Mammary epithelial cell (primary cell): ENCODE measurements at regions of chr1 and their contacts with region 1.

Region 1: DNA sequence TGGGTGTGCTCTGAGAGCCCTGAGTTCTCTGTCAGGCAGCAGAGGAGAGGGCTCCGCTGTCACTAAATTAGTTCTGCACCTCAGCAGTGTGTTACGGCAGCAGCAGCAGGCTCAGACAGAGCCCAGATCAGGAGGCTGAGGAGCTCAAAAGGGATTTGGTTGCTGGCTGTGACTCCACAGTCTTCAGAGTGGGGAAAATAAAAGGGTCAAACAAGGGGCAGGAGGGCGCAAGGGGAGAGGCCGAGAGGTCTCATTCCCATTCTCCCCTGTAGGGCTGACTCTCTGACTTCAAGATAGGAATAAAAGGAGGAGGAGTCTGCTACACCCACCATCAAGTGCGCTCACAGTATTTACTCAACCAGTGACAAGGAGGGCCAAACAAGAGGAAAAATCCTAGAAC is 9.2 kb upstream of the SLC45A3 start:
- DNase-seq: no peak
- H3K4me3 ChIP-seq: no peak overlapping the region
- H3K27ac ChIP-seq: no peak overlapping the region
- H3K4me1 ChIP-seq: no peaks in the 10 kb centered on the region
- H3K27me3 ChIP-seq: no peaks in the 10 kb centered on the region
- CTCF ChIP-seq: no peak

Region 2: GRCh38 chr1:205598841-205599668 is 90.4 kb before region 1 on chr1:
- CTCF ChIA-PET with region 1: no interaction called
- dilution Hi-C with region 1: loop called (anchors 5 kb)
- in situ Hi-C with region 1: no loop called
- intact Hi-C with region 1: no loop called
- DNase-seq: peak; percentile 22
- H3K4me3 ChIP-seq: no peak overlapping the region
- H3K27ac ChIP-seq: peak overlapping the region; percentile 2
- H3K4me1 ChIP-seq: peaks cover 40% of the 10 kb centered on the region
- H3K27me3 ChIP-seq: no peaks in the 10 kb centered on the region
- CTCF ChIP-seq: no peak

Region 3: DNA sequence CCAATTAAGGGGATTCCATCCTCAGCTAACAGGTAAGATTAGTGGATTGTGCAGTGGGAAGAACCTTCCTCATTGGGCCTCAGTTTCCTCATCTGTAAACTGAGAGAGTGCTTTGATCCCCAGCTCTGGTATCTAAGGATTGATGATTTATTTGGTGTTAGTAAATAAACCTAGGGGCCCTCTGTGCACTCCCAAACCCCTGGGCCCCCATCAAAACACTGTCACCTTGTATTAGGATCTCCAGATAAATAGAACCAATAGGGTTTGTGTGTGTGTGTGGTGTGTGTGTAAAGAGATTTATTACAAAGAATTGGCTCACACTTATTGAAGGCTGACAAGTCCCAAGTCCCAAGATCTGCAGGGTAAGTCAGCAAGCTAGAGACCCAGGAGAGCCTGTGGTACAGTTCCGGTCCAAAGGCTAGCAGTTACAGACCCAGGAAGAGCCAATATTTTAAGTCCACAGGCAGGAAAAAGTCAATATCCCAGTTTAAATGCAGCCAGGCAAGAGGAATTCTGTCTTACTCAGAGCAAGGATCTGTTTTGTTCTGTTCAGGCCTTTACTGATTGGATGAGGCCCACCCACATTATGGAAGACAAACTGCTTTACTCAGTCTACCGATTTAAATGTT is 46.7 kb before region 1 on chr1:
- CTCF ChIA-PET with region 1: no interaction called
- dilution Hi-C with region 1: loop called (anchors 5 kb)
- in situ Hi-C with region 1: no loop called
- intact Hi-C with region 1: no loop called
- DNase-seq: no peak
- H3K4me3 ChIP-seq: no peak overlapping the region
- H3K27ac ChIP-seq: no peak overlapping the region
- H3K4me1 ChIP-seq: no peaks in the 10 kb centered on the region
- H3K27me3 ChIP-seq: no peaks in the 10 kb centered on the region
- CTCF ChIP-seq: no peak

Region 4: GRCh38 chr1:205896320-205896719 is 206.8 kb after region 1 on chr1:
- CTCF ChIA-PET with region 1: no interaction called
- dilution Hi-C with region 1: no loop called
- in situ Hi-C with region 1: no loop called
- intact Hi-C with region 1: no loop called
- DNase-seq: no peak
- H3K4me3 ChIP-seq: no peak overlapping the region
- H3K27ac ChIP-seq: no peak overlapping the region
- H3K4me1 ChIP-seq: no peaks in the 10 kb centered on the region
- H3K27me3 ChIP-seq: no peaks in the 10 kb centered on the region
- CTCF ChIP-seq: no peak